Heart right ventricle (tissue), 16 donors: ENCODE measurements at regions of chr18 and their contacts with region 1.

Region 1: DNA sequence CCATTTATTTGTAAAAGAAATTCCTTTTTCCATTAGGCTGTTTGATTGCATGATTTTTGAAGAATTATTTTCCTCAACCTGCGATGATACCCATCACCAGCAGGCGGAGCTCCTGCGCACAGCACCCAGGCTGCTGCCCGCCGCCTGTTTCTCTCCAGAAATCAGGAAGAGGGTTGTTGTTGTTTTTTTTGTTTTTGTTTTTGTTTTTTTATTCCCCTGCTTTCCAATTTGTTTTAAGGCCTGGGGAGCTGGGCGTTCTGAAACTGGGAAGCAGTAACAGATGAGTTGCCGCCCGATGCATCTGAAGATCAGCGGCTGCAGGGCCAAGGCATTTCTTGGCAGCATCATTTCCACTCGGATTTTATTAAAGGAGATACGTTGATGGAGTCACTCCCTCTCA is 132.1 kb downstream of the MBP start:
- DNase-seq: peak in 1 of 2 donors; percentile 58
- ATAC-seq: peak in 5 of 8 donors; percentile 18 to 61 (median 51)
- H3K4me3 ChIP-seq: peak overlapping the region in 5 of 10 donors; percentile 7 to 41 (median 26)
- H3K27ac ChIP-seq: peak overlapping the region in 1 of 10 donors; percentile 25
- H3K4me1 ChIP-seq: peaks cover 0 to 25% (median 4%) of the 10 kb centered on the region in 9 donors
- H3K27me3 ChIP-seq: no peaks in the 10 kb centered on the region
- CTCF ChIP-seq: peak; percentile 86 to 98 (median 95)

Region 2: GRCh38 chr18:77039196-77040130 is 38.9 kb after region 1 on chr18:
- intact Hi-C with region 1: loop called in 1 of 10 experiments (anchors 5 kb)
- DNase-seq: no peak
- ATAC-seq: no peak
- H3K4me3 ChIP-seq: no peak overlapping the region
- H3K27ac ChIP-seq: no peak overlapping the region
- H3K4me1 ChIP-seq: peaks cover 0 to 25% (median 11%) of the 10 kb centered on the region in 9 donors
- H3K27me3 ChIP-seq: no peaks in the 10 kb centered on the region
- CTCF ChIP-seq: no peak

Region 3: DNA sequence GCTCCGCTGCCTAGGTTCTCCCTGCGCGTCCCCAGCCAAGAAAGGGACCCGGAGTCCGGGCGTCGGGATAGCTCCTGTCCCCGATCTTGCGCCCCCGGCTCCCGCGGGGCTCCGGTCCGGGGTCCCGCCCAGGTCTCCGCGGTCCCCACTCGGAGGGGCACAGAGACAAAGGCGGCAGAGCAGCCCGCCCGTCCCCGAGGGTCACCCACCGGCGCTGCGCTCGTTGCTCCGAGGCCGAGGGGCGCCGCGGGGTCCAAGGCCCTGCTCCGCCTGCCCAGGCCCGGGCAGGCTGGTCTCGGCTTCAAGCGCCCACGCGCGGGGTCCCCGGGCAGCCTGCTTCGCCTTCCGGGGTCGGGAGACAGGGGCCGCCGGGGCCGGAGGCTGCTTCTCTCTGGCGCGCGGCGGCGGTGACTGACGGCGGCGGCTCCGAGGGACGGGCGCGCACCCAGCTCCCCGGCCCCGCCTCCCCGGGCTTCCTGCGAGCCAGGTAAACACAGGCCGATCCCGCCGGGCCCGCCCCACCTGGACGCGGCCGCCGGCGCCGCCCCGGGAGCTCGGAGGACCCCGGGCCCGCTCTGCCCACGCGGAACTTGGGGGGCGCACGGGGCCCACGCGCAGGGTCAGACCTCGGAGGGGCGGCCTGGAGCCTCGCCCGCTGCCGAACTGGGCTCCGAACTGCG is 132.0 kb after region 1 on chr18 and contains the start of gene MBP:
- intact Hi-C with region 1: loop called in 4 of 10 experiments (anchors 10 kb)
- DNase-seq: peak; percentile 50 to 59
- ATAC-seq: peak; percentile 17 to 64 (median 58)
- H3K4me3 ChIP-seq: peak within 1 kb of the TSS; percentile 54 to 92 (median 84)
- H3K27ac ChIP-seq: peak within 1 kb of the TSS; percentile 62 to 99 (median 90)
- H3K4me1 ChIP-seq: peaks cover 5 to 61% (median 48%) of the 10 kb centered on the region in 9 donors
- H3K27me3 ChIP-seq: peaks cover 0 to 41% (median 12%) of the 10 kb centered on the region in 7 donors
- CTCF ChIP-seq: no peak
- total RNA-seq, gene MBP: 18.4 to 70.8 (median 52.6) TPM

Region 4: DNA sequence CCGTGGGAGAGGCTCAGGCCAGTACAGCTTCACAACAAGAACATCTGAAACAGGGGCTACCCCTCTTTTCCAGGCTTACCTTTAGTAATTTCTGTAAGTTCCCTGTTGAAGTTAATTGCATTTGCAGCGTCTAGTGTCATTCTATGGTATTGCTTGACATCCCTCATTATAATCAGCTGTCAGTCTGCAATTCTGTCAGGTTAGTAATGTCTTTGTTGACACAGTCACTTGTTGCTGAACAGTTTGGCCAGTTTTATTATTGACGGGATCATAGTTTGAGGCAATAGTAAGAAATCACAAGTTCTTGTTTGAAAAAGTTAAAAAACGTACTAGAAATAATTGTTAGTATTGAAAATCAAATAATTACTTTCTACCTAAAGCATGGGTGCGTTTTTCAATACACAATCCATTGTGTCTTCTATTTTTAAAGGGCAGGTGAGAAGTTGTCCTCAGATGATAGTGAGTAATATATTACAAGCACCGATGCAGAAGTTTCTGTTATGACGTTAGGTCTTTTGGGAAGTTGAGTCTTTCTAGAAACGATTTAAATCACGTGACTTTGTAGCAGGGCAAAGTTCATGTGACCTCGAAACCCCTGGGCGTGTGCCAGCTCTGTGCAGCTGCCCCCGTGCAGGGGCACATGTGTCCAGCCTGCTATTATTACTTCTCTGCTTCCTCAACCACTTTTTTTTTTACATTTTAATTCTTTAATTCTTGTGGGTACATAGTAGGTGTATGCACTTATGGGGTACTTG is 181.6 kb after region 1 on chr18:
- intact Hi-C with region 1: no loop called
- DNase-seq: no peak
- ATAC-seq: no peak
- H3K4me3 ChIP-seq: no peak overlapping the region
- H3K27ac ChIP-seq: no peak overlapping the region
- H3K4me1 ChIP-seq: peaks cover 0 to 10% (median 0%) of the 10 kb centered on the region in 9 donors
- H3K27me3 ChIP-seq: no peaks in the 10 kb centered on the region
- CTCF ChIP-seq: no peak

Region 5: DNA sequence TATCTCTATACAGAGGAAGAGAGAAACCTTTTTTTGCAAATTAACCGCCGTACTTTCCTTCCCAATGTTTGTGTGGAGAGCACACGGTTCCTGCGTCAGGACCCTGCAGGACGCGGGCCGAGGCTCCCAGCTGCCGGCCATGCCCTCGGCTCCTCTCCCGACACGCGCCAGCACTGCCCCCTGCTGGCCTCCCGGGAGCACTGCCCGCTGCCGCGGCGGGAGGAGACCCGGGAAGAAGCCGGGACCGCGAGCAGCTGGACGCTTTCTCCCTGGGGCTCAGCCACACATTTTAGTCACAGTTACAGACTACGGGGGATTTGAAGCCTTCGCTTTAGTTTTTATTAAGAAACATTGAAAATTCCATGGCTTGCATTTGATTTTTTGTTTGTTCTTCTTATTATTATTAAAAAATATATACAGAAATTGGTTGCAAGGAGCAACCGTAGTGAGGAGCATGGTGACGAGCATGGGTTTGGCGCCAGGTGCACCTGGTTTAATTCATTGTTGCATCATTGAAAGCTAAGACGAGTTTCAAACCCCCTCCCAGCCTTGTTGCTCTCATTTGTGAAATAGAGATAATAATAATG is 650.4 kb after region 1 on chr18:
- intact Hi-C with region 1: loop called in 1 of 10 experiments (anchors 10 kb)
- DNase-seq: peak; percentile 63 to 80
- ATAC-seq: peak; percentile 83 to 96 (median 92)
- H3K4me3 ChIP-seq: peak overlapping the region in 1 of 10 donors; percentile 8
- H3K27ac ChIP-seq: no peak overlapping the region
- H3K4me1 ChIP-seq: peaks cover 0 to 7% (median 0%) of the 10 kb centered on the region in 9 donors
- H3K27me3 ChIP-seq: peaks cover 0 to 18% (median 12%) of the 10 kb centered on the region in 7 donors
- CTCF ChIP-seq: peak; percentile 69 to 95 (median 89)